ENCODE measurements at regions of chr3 and their contacts with region 1.

Region 1: GRCh38 chr3:138608322-138609135 is at the start of gene FAIM:
- DNase-seq: peak; percentile 68
- H3K4me3 Mint-ChIP-seq: peak within 1 kb of the TSS; percentile 81
- H3K27ac Mint-ChIP-seq: peak within 1 kb of the TSS; percentile 87
- H3K4me1 Mint-ChIP-seq: peaks cover 12% of the 10 kb centered on the region
- H3K27me3 Mint-ChIP-seq: no peaks in the 10 kb centered on the region
- CTCF ChIP-seq: no peak
- total RNA-seq, gene FAIM: 14.1 and 15.0 TPM in 2 replicates

Region 2: DNA sequence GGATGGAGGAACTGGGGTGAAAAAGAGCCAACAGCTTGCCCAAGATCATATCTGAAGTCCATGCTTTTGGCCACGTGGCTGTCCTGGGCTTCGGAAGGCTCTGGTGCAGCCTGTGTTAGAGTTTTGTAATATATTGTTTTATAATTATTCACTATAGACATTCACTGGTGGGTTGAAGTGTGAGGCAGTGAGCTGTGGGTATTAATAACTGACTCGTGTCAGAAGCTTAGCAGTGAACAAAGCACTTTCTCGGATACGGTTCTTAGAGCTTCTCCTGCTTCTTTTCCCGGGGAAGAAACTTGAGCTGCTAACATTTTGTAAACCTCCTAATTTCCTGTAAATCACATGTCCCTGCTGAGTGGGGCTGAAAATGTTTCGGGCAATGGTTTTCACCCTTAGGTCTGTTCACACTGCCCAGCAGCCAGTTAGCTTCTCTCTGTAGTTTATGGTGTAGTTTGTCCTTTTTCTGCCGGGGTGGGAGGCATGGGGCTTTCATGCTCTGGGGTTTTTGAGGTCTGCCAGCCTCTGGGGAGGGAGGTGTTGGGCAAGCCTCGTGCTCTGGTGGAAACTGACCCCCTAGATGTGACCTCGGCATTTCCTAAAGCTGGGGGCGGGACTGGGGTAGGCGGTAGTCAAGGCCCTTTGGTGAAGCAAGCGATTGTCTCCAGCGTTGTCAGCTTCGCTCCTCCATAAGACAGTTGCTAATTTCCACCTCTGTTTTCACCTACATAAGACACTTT is 258.4 kb before region 1 on chr3:
- CTCF ChIA-PET with region 1: no interaction called
- POLR2A ChIA-PET with region 1: no interaction called
- intact Hi-C with region 1: no loop called
- DNase-seq: no peak
- H3K4me3 Mint-ChIP-seq: no peak overlapping the region
- H3K27ac Mint-ChIP-seq: no peak overlapping the region
- H3K4me1 Mint-ChIP-seq: peaks cover 5% of the 10 kb centered on the region
- H3K27me3 Mint-ChIP-seq: no peaks in the 10 kb centered on the region
- CTCF ChIP-seq: no peak

Region 3: GRCh38 chr3:138625707-138626365 is 17.3 kb after region 1 on chr3:
- CTCF ChIA-PET with region 1: interaction called, 5 read pairs
- POLR2A ChIA-PET with region 1: interaction called, 10 read pairs
- intact Hi-C with region 1: no loop called
- DNase-seq: peak; percentile 74
- H3K4me3 Mint-ChIP-seq: no peak overlapping the region
- H3K27ac Mint-ChIP-seq: no peak overlapping the region
- H3K4me1 Mint-ChIP-seq: peaks cover 7% of the 10 kb centered on the region
- H3K27me3 Mint-ChIP-seq: no peaks in the 10 kb centered on the region
- CTCF ChIP-seq: no peak

Region 4: DNA sequence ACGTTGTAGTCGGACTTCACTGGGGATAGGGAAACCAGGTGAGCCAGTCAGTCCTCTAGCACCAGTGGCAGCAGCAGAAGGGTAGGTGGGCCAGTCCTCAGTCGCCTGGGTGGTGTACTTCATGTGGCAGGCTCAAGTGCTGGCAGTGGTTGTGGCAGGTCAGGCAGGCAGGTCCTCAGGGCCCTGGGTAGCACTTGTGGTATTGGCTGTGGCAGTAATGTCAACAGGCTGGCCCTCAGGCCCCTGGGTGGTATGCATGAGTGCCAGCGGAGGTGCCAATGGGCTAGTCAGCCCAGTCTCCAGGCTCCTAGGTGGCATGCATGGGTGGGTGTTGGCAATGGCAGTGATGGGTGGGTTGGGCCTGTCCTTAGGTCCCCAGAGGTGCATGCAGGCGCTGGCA is 40.6 kb after region 1 on chr3:
- CTCF ChIA-PET with region 1: no interaction called
- POLR2A ChIA-PET with region 1: no interaction called
- intact Hi-C with region 1: no loop called
- DNase-seq: no peak
- H3K4me3 Mint-ChIP-seq: no peak overlapping the region
- H3K27ac Mint-ChIP-seq: no peak overlapping the region
- H3K4me1 Mint-ChIP-seq: no peaks in the 10 kb centered on the region
- H3K27me3 Mint-ChIP-seq: no peaks in the 10 kb centered on the region
- CTCF ChIP-seq: no peak

Measured in MCF 10A (cell line).